ENCODE measurements at regions of chr6 and their contacts with region 1.

Region 1: DNA sequence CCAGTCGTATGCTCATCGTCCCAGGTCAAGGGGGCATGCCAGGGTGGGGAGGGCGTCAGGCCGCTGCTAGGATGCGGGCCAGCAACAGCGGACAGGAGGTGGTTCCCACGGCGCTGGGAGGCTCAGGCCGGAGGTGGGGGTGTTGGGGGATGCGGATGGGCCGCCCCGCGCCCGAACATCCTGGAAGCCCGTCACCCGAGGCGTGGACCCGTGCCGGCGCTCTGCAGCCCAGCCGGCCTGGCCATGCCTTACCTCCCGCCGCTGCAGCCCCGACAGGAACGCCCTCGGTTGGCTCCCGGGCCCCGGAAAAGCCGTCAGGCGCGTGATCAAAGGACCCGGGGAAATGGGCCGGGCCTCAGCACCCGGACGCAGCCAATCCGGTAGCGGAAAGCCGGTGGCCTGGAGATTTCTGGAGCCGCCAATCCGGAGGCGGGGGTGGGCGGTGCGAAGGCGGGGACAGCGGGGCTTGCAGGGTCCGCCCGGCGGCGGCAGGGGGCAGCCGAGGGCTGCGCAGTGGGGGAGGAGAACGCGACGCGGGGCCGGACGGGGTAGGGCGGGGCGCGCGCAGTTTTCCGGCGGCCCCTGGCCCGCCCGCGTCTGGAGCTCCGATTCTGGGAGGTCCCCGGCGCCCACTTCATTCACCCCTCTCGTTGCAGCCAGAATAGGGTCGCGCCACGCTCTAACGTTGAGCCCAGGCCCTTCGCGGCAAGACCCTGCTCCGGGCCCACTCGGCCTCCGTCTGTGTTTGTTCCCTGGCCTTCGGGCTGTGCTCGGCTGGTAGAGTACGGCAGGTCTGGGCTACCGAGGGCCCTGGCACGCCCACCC is at the start of gene SMIM29:
- DNase-seq: peak; percentile 99
- H3K4me3 ChIP-seq: peak within 1 kb of the TSS; percentile 74 to 91 (median 78)
- H3K27ac ChIP-seq: peak within 1 kb of the TSS; percentile 85 to 92 (median 90)
- H3K4me1 ChIP-seq: peaks cover 0 to 31% (median 25%) of the 10 kb centered on the region in 4 donors
- H3K27me3 ChIP-seq: no peaks in the 10 kb centered on the region
- CTCF ChIP-seq: peak; percentile 73 to 93 (median 83)
- EP300 ChIP-seq: peak in 1 of 4 donors; percentile 32
- POLR2A ChIP-seq: peak; percentile 59 to 68
- total RNA-seq, gene SMIM29: 16.8 to 34.3 (median 27.6) TPM

Region 2: GRCh38 chr6:34067814-34068213 is 181.1 kb before region 1 on chr6:
- intact Hi-C with region 1: no loop called
- DNase-seq: no peak
- H3K4me3 ChIP-seq: no peak overlapping the region
- H3K27ac ChIP-seq: no peak overlapping the region
- H3K4me1 ChIP-seq: peaks cover 0 to 3% (median 0%) of the 10 kb centered on the region in 4 donors
- H3K27me3 ChIP-seq: peaks cover 6 to 51% (median 49%) of the 10 kb centered on the region in 3 donors
- CTCF ChIP-seq: no peak
- EP300 ChIP-seq: no peak
- POLR2A ChIP-seq: no peak

Region 3: GRCh38 chr6:34132486-34133185 is 116.3 kb before region 1 on chr6:
- intact Hi-C with region 1: no loop called
- DNase-seq: no peak
- H3K4me3 ChIP-seq: no peak overlapping the region
- H3K27ac ChIP-seq: no peak overlapping the region
- H3K4me1 ChIP-seq: no peaks in the 10 kb centered on the region
- H3K27me3 ChIP-seq: peaks cover 9 to 80% (median 28%) of the 10 kb centered on the region in 3 donors
- CTCF ChIP-seq: no peak
- EP300 ChIP-seq: no peak
- POLR2A ChIP-seq: no peak

Region 4: DNA sequence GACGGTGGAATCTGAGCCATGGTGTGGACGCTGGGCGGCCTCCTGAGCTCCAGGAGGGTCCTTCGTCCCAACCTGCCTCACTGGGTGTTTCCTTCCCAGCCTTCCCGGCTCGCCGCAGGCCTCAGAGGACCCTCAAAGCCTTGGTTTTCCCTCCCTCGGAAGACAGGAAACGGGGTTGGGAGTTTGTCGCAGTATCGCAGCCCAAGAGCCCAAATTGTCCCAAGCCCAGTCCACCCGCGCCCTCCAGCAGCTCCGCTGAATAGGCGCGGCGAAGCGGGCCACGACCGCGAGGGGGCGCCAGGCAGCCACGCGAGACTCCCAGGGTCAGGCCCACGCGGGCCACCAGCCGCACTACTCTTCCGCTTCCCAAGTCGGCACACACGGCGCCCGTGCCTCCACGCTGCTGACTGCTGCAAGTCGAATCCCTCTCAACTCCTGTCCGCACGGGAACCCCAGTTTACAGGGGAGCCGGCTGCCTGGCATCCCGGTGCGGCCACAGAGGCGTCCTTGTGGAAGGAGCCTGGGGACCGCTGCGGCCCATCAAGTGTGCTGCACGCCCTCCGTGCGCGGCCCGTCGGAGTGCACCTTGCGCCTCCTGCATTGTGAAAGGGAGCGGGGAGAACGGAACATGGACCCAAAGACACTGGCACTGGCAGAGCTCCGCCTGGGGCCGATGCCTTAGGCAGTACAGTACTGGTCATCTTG is 52.7 kb before region 1 on chr6:
- intact Hi-C with region 1: loop called (anchors 2 kb)
- DNase-seq: peak; percentile 92
- H3K4me3 ChIP-seq: peak overlapping the region; percentile 31 to 58 (median 50)
- H3K27ac ChIP-seq: no peak overlapping the region
- H3K4me1 ChIP-seq: peaks cover 0 to 11% (median 8%) of the 10 kb centered on the region in 4 donors
- H3K27me3 ChIP-seq: no peaks in the 10 kb centered on the region
- CTCF ChIP-seq: peak; percentile 85 to 98 (median 90)
- EP300 ChIP-seq: no peak
- POLR2A ChIP-seq: no peak

Region 5: DNA sequence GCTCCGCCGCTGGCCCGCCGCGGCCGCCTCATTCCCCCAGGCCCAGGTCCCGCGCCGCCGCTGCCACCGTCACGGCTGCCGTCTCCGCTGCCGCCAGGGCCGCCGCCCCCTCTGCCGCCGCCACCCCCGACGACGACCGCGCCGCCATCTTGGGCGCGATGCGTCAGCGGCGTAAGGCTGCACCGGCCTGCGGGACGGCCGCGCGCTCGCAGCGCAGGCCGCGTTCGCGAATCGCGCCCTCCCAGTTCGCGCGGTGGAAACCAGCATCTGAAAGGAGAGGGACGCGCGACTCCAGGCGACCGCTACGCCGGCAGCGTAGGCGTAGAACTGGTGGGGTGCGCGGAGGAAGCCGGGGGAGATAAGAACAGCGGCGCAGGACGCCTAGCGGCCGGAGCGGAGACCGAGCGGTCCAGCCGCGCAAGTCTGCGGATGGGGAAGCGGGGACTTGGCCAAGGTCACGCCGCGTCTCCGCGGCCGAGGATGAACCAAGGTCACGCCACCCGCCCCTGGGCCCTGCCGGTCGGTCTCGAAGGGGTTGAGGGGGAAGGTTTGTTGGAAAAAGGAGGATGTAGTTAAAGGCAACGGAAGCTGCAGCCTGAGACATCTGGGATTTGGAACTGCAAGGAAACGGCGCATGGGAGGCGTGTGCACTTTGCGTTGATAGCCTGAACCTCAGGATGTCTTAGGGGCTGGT is 143.7 kb after region 1 on chr6 and contains the start of gene NUDT3:
- intact Hi-C with region 1: loop called (anchors 1 kb)
- DNase-seq: peak; percentile 97
- H3K4me3 ChIP-seq: peak within 1 kb of the TSS; percentile 82 to 98 (median 86)
- H3K27ac ChIP-seq: peak within 1 kb of the TSS; percentile 95 to 96 (median 96)
- H3K4me1 ChIP-seq: peaks cover 0 to 47% (median 40%) of the 10 kb centered on the region in 4 donors
- H3K27me3 ChIP-seq: no peaks in the 10 kb centered on the region
- CTCF ChIP-seq: peak; percentile 75 to 88 (median 84)
- EP300 ChIP-seq: no peak
- POLR2A ChIP-seq: no peak
- total RNA-seq, gene NUDT3: 31.4 to 45.7 (median 37.5) TPM

Region 6: GRCh38 chr6:34414999-34415858 is 166.3 kb after region 1 on chr6:
- intact Hi-C with region 1: loop called (anchors 1 kb)
- DNase-seq: peak; percentile 78
- H3K4me3 ChIP-seq: no peak overlapping the region
- H3K27ac ChIP-seq: peak overlapping the region; percentile 60 to 73 (median 66)
- H3K4me1 ChIP-seq: peaks cover 0 to 11% (median 5%) of the 10 kb centered on the region in 4 donors
- H3K27me3 ChIP-seq: no peaks in the 10 kb centered on the region
- CTCF ChIP-seq: peak; percentile 35 to 78 (median 54)
- EP300 ChIP-seq: no peak
- POLR2A ChIP-seq: no peak

Region 7: DNA sequence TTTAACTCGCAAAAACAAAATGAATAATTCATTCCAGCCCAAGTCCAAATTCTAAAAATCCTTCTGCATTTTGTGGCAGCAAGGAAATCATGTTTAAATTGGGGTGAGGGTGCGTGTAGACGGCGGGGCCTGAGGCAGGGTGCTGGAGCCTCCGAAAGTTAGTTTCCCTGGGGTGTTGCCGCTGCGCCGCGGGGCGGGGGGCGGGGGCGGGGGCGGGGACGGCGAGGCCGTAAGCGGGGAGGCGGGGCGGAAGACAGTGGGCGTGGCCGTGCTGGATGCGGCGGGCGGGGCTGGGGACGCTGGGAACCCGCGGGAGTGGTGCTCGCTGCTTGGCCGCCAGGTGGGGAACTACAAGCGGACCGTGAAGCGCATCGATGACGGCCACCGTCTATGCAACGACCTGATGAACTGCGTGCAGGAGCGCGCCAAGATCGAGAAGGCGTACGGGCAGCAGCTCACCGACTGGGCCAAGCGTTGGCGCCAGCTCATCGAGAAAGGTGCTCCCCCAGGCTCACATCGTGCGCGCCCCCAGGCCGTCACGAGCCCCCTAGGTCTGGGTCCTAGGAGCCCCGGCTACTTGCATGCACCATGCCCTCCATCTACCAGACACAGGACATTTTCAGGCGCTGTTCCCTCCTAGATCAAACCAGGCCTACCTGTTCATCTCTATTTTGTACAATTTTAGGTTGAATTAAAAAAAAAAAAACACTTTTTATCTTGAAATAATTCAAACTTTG is 278.2 kb after region 1 on chr6:
- intact Hi-C with region 1: loop called (anchors 5 kb)
- DNase-seq: peak; percentile 97
- H3K4me3 ChIP-seq: peak overlapping the region in 3 of 4 donors; percentile 6 to 35 (median 30)
- H3K27ac ChIP-seq: peak overlapping the region; percentile 39 to 67 (median 58)
- H3K4me1 ChIP-seq: peaks cover 0 to 13% (median 8%) of the 10 kb centered on the region in 4 donors
- H3K27me3 ChIP-seq: no peaks in the 10 kb centered on the region
- CTCF ChIP-seq: peak; percentile 58 to 73 (median 62)
- EP300 ChIP-seq: no peak
- POLR2A ChIP-seq: no peak

Measured in sigmoid colon (tissue), 7 donors.